Activated T-helper 1 cell treated with anti-CD3 and anti-CD28 coated beads, Interleukin-12 subunit alpha, Interleukin-12 subunit beta, Interleukin-2, Interleukin-4 antibody, amounts not matched to agents 30 ng/mL and 10 ng/mL and 1 ng/mL, durations not matched to agents 14 hours and 24 hours and 36 hours (primary cell): ENCODE measurements at regions of chr1 and their contacts with region 1.

Region 1: DNA sequence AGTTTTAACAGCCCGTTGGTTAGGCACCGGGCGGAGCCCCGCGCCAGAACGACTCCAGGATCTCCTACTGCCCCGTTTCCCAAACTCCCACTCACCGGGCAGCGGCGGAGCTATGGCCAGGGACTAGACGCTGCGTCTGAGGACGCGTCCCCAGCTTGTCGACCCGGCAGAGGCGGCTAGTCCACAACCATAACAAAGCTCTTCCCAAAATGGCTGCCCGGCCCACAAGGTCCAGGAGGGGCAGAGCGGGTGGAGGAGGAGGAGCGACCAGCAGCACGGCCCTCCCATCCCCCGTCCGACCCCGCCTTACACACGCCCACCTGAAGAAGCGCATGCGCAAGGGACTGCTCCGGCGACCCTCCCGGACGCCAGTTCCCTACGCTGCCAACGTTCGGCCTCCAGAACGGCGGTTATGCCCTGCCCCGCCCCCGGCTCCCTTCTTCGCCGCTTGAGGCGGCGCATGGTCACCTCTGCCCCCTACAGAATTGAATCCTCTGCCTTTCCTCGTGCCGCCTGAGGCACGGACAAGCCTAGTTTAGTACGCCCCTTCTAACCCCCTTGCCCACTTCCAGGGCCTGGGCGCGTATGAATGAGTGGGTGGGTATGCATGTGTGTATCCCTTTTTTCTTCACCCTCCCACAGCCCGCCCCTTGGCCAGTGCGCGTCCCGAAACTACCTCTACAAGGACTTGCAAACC is at the start of gene GPBP1L1:
- DNase-seq: peak; percentile 96
- H3K4me3 Mint-ChIP-seq: peak within 1 kb of the TSS; percentile 99
- H3K27ac Mint-ChIP-seq: peak within 1 kb of the TSS; percentile 99
- H3K4me1 Mint-ChIP-seq: peaks cover 31% of the 10 kb centered on the region
- H3K27me3 Mint-ChIP-seq: no peaks in the 10 kb centered on the region
- total RNA-seq, gene GPBP1L1: 99.3 and 109 TPM in 2 replicates

Region 2: DNA sequence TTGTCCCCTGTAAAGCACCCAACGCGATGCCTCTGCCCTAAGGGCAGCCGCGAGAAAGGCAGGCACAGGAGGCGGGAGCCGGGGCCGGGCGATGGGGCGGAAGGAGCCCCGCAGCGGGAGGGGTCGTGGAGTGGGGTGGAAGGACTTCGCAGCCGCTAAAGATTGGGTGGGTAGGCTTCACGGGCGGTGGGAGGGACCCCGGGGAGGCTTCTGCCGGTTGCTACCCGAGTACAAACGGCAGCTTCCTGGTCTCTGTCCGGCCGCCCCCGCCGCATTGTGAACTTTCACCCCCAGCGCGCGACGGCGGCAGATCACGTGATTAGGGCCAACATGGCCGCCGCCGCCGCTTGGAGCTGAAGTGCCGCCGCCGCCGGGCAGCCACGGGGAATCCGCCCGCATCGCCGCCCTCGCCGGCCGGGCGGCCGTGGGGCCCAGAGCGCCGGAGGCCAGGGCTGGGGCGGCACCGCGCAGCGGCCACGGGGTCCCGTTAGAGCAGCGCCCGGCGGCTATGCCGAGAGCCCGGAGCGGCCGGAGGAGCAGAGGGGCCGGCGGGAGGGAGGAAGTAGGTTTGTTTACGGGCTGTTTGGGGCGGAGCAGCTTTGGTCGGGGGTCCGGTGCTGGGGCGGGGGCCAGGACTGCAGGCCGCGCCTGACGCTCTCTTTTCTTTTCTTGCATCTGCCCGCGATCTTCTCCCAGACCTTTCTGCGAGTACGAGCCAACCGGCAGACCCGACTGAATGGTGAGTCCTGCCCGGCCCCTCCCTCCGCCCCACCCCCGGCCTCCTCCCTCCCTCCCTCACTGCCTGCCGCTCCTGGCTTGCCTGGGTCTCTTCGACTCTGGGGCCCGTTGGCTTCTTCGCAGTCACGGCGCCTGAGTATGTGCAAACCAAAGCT is 1054.6 kb before region 1 on chr1:
- intact Hi-C with region 1: loop called (anchors 5 kb)
- DNase-seq: peak; percentile 86
- H3K4me3 Mint-ChIP-seq: peak overlapping the region; percentile 91
- H3K27ac Mint-ChIP-seq: peak overlapping the region; percentile 97
- H3K4me1 Mint-ChIP-seq: peaks cover 40% of the 10 kb centered on the region
- H3K27me3 Mint-ChIP-seq: peaks cover 2% of the 10 kb centered on the region

Region 3: GRCh38 chr1:44775078-44775929 is 911.2 kb before region 1 on chr1 and contains the start of gene RPS8:
- intact Hi-C with region 1: loop called (anchors 5 kb)
- DNase-seq: peak; percentile 85
- H3K4me3 Mint-ChIP-seq: peak within 1 kb of the TSS; percentile 88
- H3K27ac Mint-ChIP-seq: peak within 1 kb of the TSS; percentile 93
- H3K4me1 Mint-ChIP-seq: peaks cover 23% of the 10 kb centered on the region
- H3K27me3 Mint-ChIP-seq: no peaks in the 10 kb centered on the region
- total RNA-seq, gene RPS8: 2,172 and 2,226 TPM in 2 replicates

Region 4: GRCh38 chr1:45303582-45304310 is 382.7 kb before region 1 on chr1:
- intact Hi-C with region 1: loop called (anchors 1 kb)
- DNase-seq: peak; percentile 87
- H3K4me3 Mint-ChIP-seq: peak overlapping the region; percentile 92
- H3K27ac Mint-ChIP-seq: peak overlapping the region; percentile 93
- H3K4me1 Mint-ChIP-seq: peaks cover 50% of the 10 kb centered on the region
- H3K27me3 Mint-ChIP-seq: no peaks in the 10 kb centered on the region

Region 5: DNA sequence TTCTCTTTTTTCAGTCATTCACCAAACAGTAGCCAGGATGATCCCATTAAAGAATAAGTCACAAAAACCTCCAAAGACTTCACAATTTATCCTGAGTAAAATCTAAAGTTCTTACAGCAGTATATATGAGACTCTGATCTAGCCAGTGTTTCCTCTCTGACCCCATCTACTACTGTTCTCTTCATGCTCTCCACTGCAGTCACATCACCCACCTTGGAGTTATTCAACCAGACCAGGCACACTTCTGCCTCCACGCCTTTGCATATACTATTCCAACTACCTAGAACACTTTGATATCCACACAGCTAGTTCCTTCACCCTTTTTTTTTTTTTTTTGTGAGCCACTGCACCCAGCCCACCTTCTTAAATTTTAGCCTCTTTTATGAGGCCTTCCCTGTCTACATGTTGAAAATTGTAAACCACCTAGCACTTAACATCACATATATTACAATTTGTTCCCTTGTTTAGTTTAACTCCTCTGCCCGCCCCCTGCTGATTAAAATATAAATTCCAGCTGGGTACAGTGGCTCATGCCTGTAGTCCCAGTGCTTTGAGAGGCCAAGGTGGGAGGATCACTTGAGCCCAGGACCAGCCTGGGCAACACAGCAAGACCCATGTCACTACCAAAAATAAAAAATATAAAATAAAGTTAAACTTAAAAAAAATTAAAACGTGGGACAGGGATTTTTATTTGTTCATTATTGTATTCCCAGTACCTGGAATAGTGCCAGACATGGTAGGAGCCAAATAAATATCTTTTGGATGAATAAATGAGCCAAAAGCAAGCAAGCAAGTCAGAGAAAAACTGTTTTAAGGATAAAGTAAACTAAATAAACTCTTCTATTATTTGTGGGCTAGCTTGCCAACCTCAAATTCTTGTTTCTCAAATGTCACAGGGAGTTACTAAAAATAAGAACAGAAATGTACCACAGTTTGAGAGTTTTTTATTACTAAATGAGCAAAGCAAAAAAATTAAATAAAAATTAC is 311.1 kb before region 1 on chr1:
- intact Hi-C with region 1: no loop called
- DNase-seq: no peak
- H3K4me3 Mint-ChIP-seq: no peak overlapping the region
- H3K27ac Mint-ChIP-seq: no peak overlapping the region
- H3K4me1 Mint-ChIP-seq: no peaks in the 10 kb centered on the region
- H3K27me3 Mint-ChIP-seq: no peaks in the 10 kb centered on the region

Region 6: GRCh38 chr1:45521398-45522323 is 164.8 kb before region 1 on chr1 and contains the start of gene PRDX1:
- intact Hi-C with region 1: loop called (anchors 5 kb)
- DNase-seq: peak; percentile 97
- H3K4me3 Mint-ChIP-seq: peak within 1 kb of the TSS; percentile 98
- H3K27ac Mint-ChIP-seq: peak within 1 kb of the TSS; percentile 91
- H3K4me1 Mint-ChIP-seq: peaks cover 44% of the 10 kb centered on the region
- H3K27me3 Mint-ChIP-seq: peaks cover 1% of the 10 kb centered on the region
- total RNA-seq, gene PRDX1: 635 and 655 TPM in 2 replicates

Region 7: GRCh38 chr1:45772971-45773370 is 86.5 kb after region 1 on chr1:
- intact Hi-C with region 1: no loop called
- DNase-seq: no peak
- H3K4me3 Mint-ChIP-seq: no peak overlapping the region
- H3K27ac Mint-ChIP-seq: no peak overlapping the region
- H3K4me1 Mint-ChIP-seq: no peaks in the 10 kb centered on the region
- H3K27me3 Mint-ChIP-seq: peaks cover 2% of the 10 kb centered on the region

Region 8: GRCh38 chr1:45803301-45803780 is 116.9 kb after region 1 on chr1 and contains the start of gene MAST2:
- intact Hi-C with region 1: loop called (anchors 1 kb)
- DNase-seq: peak; percentile 87
- H3K4me3 Mint-ChIP-seq: peak within 1 kb of the TSS; percentile 99
- H3K27ac Mint-ChIP-seq: peak within 1 kb of the TSS; percentile 93
- H3K4me1 Mint-ChIP-seq: peaks cover 32% of the 10 kb centered on the region
- H3K27me3 Mint-ChIP-seq: no peaks in the 10 kb centered on the region
- total RNA-seq, gene MAST2: 32.0 and 37.2 TPM in 2 replicates

Region 9: DNA sequence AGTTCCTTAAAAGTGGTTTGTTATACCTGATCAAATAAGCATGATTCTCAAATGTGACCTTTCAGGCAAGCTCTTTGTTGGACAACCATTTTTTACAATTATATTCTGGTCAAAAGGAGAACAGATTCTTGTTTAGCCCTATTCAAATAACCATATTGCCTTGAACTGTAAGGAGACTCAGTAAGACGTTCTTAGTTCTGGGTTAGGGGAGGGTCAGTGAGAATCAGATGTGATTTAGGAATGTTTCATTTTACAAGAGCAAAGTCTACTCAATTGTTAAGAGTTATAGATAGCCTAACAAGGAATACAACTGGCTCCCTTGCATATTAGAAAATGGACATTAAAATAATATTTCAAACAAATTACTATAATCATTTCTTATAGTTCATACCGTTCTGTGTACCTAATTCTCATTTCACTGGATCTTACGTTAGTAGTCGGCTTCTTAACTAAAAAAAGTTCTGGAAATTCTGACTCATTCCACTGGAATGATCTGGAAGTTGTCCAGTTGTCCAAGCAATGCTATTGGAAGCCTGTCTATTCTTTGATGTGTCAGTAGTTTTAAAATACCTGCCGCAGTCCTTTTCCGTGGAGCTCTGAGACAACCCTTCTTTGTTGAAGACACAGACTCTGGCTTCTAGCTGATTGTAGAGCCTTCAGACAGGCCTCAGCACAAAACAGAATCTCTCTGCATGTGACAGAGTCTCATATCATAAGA is 205.8 kb after region 1 on chr1:
- intact Hi-C with region 1: no loop called
- DNase-seq: no peak
- H3K4me3 Mint-ChIP-seq: no peak overlapping the region
- H3K27ac Mint-ChIP-seq: no peak overlapping the region
- H3K4me1 Mint-ChIP-seq: peaks cover 13% of the 10 kb centered on the region
- H3K27me3 Mint-ChIP-seq: no peaks in the 10 kb centered on the region

Region 10: GRCh38 chr1:46197964-46198811 is 511.7 kb after region 1 on chr1 and contains the start of gene POMGNT1:
- intact Hi-C with region 1: loop called (anchors 5 kb)
- DNase-seq: peak; percentile 78
- H3K4me3 Mint-ChIP-seq: peak within 1 kb of the TSS; percentile 87
- H3K27ac Mint-ChIP-seq: peak within 1 kb of the TSS; percentile 71
- H3K4me1 Mint-ChIP-seq: peaks cover 27% of the 10 kb centered on the region
- H3K27me3 Mint-ChIP-seq: no peaks in the 10 kb centered on the region
- total RNA-seq, gene POMGNT1: 80.8 and 85.7 TPM in 2 replicates

Region 11: DNA sequence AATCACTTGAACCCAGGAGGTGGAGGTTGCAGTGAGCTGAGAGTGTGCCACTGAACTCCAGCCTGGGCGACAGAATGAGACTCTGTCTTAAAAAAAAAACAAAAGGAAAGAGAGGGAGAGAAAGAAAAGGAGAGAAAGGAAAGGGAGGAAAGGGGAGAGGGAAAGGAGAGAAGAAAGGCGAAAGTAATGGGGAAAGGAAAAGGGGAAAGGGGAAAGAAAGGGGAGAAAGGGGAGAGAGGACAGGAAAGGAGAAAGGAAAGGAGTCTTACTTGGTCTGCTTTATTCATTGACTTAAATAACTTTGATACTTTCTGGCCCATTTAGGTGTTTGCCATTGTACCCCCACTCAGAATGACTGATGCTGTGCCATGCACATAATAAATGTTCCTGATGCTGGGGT is 665.9 kb after region 1 on chr1:
- intact Hi-C with region 1: no loop called
- DNase-seq: no peak
- H3K4me3 Mint-ChIP-seq: no peak overlapping the region
- H3K27ac Mint-ChIP-seq: no peak overlapping the region
- H3K4me1 Mint-ChIP-seq: peaks cover 11% of the 10 kb centered on the region
- H3K27me3 Mint-ChIP-seq: no peaks in the 10 kb centered on the region